Activated B cell treated with CpG ODN at 0.5 μM for 24 hours (primary cell): ENCODE measurements at regions of chr3 and their contacts with region 1.

Region 1: GRCh38 chr3:49093853-49094767 is at the start of gene QRICH1:
- DNase-seq: peak; percentile 95
- ATAC-seq: peak; percentile 78
- H3K4me3 Mint-ChIP-seq: peak within 1 kb of the TSS; percentile 97
- H3K27ac Mint-ChIP-seq: peak within 1 kb of the TSS; percentile 97
- H3K4me1 Mint-ChIP-seq: peaks cover 46% of the 10 kb centered on the region
- H3K27me3 Mint-ChIP-seq: no peaks in the 10 kb centered on the region
- CTCF ChIP-seq: no peak
- total RNA-seq, gene QRICH1: 142 and 155 TPM in 2 replicates

Region 2: DNA sequence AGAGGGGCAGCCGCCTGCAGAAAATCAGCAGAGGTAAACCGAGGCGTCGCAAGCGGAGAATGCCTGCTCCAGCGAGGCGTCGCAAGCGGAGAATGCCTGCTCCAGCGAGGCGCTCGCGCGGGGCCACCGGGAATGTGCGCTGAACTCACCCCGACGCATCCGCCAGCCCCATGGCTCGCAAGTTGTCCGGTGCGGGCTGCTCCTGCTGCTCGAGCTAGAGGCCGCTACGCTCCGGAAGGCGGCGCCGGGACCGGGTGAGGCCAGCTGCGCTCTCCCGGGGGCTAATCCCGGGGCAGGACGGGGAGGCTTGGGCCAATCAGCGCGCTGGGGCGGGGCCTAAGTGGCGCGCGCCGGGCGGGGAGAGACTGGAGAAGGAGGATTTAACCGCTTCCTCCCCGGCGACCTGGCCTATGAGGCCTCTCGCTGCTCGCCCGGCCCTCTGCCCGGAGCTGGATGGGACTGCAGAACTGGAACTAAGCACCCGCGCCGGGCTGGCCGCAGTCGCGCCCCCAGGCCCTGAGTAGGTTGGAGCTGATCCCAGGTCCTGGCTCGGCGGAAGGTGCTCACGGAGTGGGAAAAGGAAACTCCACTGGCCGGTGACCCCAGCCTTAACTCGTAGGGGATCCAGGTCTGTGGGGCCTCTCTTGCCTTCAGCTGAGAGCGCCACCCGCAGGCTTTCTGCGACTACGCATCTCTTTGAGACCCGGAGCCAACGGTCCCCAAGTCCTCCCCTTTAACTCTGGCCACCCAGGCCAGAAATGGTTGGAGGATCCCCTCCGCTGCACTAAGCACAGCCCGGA is 458.7 kb before region 1 on chr3 and contains the start of gene SLC26A6:
- CTCF ChIA-PET with region 1: no interaction called
- POLR2A ChIA-PET with region 1: no interaction called
- intact Hi-C with region 1: loop called (anchors 5 kb)
- DNase-seq: peak; percentile 90
- ATAC-seq: peak; percentile 97
- H3K4me3 Mint-ChIP-seq: peak within 1 kb of the TSS; percentile 89
- H3K27ac Mint-ChIP-seq: peak within 1 kb of the TSS; percentile 50
- H3K4me1 Mint-ChIP-seq: peaks cover 15% of the 10 kb centered on the region
- H3K27me3 Mint-ChIP-seq: no peaks in the 10 kb centered on the region
- CTCF ChIP-seq: no peak
- total RNA-seq, gene SLC26A6: 12.4 and 21.5 TPM in 2 replicates

Region 3: GRCh38 chr3:48989796-48990635 is 104.1 kb before region 1 on chr3 and contains the start of gene P4HTM:
- CTCF ChIA-PET with region 1: interaction called, 48 read pairs
- POLR2A ChIA-PET with region 1: interaction called, 40 read pairs
- intact Hi-C with region 1: loop called (anchors 1 kb)
- DNase-seq: peak; percentile 58
- ATAC-seq: peak; percentile 64
- H3K4me3 Mint-ChIP-seq: peak within 1 kb of the TSS; percentile 92
- H3K27ac Mint-ChIP-seq: peak within 1 kb of the TSS; percentile 83
- H3K4me1 Mint-ChIP-seq: peaks cover 28% of the 10 kb centered on the region
- H3K27me3 Mint-ChIP-seq: no peaks in the 10 kb centered on the region
- CTCF ChIP-seq: no peak
- total RNA-seq, gene P4HTM: 26.0 and 34.4 TPM in 2 replicates

Region 4: DNA sequence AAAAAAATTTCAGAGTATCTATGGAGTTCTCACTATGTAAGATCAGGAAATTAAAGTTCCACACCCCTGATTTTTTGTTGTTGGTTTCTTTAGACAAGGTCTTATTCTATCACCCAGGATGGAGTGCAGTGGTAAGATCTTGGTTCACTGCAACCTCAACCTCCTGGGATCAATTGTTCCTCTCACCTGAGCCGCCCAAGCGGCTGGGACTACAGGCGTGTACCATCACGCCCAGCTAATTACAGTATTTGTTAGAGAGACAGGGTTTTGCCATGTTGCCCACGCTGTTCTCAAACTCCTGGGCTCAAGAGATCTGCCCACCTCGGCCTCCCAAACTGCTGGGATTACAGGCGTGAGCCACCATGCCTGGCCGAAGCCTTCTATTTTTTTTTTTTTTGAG is 12.7 kb before region 1 on chr3:
- CTCF ChIA-PET with region 1: no interaction called
- POLR2A ChIA-PET with region 1: interaction called, 26 read pairs
- intact Hi-C with region 1: no loop called
- DNase-seq: no peak
- ATAC-seq: no peak
- H3K4me3 Mint-ChIP-seq: no peak overlapping the region
- H3K27ac Mint-ChIP-seq: no peak overlapping the region
- H3K4me1 Mint-ChIP-seq: peaks cover 12% of the 10 kb centered on the region
- H3K27me3 Mint-ChIP-seq: no peaks in the 10 kb centered on the region
- CTCF ChIP-seq: no peak

Region 5: GRCh38 chr3:49165771-49166751 is 72.0 kb after region 1 on chr3 and contains the start of gene CCDC71:
- CTCF ChIA-PET with region 1: no interaction called
- POLR2A ChIA-PET with region 1: interaction called, 10 read pairs
- intact Hi-C with region 1: loop called (anchors 2 kb)
- DNase-seq: peak; percentile 74
- ATAC-seq: peak; percentile 83
- H3K4me3 Mint-ChIP-seq: peak within 1 kb of the TSS; percentile 92
- H3K27ac Mint-ChIP-seq: peak within 1 kb of the TSS; percentile 84
- H3K4me1 Mint-ChIP-seq: peaks cover 26% of the 10 kb centered on the region
- H3K27me3 Mint-ChIP-seq: peaks cover 2% of the 10 kb centered on the region
- CTCF ChIP-seq: no peak
- total RNA-seq, gene CCDC71: 28.3 and 28.9 TPM in 2 replicates

Region 6: GRCh38 chr3:49428697-49429100 is 334.6 kb after region 1 on chr3:
- CTCF ChIA-PET with region 1: no interaction called
- POLR2A ChIA-PET with region 1: interaction called, 10 read pairs
- intact Hi-C with region 1: no loop called
- DNase-seq: no peak
- ATAC-seq: peak; percentile 1
- H3K4me3 Mint-ChIP-seq: peak overlapping the region; percentile 92
- H3K27ac Mint-ChIP-seq: peak overlapping the region; percentile 96
- H3K4me1 Mint-ChIP-seq: peaks cover 17% of the 10 kb centered on the region
- H3K27me3 Mint-ChIP-seq: no peaks in the 10 kb centered on the region
- CTCF ChIP-seq: no peak

Region 7: DNA sequence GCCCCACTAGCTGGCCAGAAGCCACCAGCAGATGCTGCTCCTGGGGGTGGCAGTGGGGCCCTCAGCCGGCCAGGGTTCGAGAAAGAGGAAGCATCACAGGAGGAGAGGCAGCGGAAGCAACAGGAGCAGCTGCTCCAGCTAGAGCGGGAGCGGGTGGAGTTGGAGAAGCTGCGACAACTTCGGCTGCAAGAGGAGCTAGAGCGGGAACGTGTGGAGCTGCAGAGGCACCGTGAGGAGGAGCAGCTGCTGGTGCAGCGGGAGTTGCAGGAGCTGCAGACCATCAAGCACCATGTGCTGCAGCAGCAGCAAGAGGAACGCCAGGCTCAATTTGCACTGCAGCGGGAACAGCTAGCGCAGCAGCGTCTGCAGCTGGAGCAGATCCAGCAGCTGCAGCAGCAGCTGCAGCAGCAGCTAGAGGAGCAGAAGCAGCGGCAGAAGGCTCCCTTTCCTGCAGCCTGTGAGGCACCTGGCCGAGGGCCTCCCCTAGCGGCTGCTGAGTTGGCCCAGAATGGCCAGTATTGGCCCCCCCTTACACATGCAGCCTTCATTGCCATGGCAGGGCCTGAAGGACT is 562.5 kb after region 1 on chr3:
- CTCF ChIA-PET with region 1: no interaction called
- POLR2A ChIA-PET with region 1: no interaction called
- intact Hi-C with region 1: no loop called
- DNase-seq: no peak
- ATAC-seq: no peak
- H3K4me3 Mint-ChIP-seq: no peak overlapping the region
- H3K27ac Mint-ChIP-seq: no peak overlapping the region
- H3K4me1 Mint-ChIP-seq: peaks cover 8% of the 10 kb centered on the region
- H3K27me3 Mint-ChIP-seq: no peaks in the 10 kb centered on the region
- CTCF ChIP-seq: no peak